Caco-2 (cell line): ENCODE measurements at regions of chr2 and their contacts with region 1.

Region 1: DNA sequence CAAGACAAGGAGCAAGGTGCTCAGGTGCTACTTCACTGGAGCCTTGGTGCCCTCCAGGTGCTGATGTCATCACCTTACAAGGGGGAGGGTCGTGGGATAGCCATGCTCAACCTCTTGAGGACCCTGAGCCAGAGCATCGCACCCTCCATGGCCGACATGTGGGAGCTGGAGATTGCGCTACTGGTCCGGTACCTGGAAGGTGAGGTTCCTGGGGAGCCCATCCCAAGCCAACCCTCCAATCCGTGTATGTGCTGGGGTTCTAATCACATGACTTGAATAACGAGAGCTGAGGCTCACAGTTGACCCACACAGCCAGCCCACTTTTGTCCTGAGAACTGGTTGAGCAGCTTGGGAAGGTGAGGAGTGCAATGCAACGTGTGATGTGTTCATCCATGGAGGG is 25.9 kb downstream of the MROH2A start:
- DNase-seq: no peak
- H3K4me3 ChIP-seq: no peak overlapping the region
- H3K4me3 Mint-ChIP-seq: no peak overlapping the region
- H3K27ac Mint-ChIP-seq: no peak overlapping the region
- H3K4me1 ChIP-seq: no peaks in the 10 kb centered on the region
- H3K4me1 Mint-ChIP-seq: no peaks in the 10 kb centered on the region
- H3K27me3 ChIP-seq: no peaks in the 10 kb centered on the region
- H3K27me3 Mint-ChIP-seq: no peaks in the 10 kb centered on the region
- CTCF ChIP-seq: no peak

Region 2: DNA sequence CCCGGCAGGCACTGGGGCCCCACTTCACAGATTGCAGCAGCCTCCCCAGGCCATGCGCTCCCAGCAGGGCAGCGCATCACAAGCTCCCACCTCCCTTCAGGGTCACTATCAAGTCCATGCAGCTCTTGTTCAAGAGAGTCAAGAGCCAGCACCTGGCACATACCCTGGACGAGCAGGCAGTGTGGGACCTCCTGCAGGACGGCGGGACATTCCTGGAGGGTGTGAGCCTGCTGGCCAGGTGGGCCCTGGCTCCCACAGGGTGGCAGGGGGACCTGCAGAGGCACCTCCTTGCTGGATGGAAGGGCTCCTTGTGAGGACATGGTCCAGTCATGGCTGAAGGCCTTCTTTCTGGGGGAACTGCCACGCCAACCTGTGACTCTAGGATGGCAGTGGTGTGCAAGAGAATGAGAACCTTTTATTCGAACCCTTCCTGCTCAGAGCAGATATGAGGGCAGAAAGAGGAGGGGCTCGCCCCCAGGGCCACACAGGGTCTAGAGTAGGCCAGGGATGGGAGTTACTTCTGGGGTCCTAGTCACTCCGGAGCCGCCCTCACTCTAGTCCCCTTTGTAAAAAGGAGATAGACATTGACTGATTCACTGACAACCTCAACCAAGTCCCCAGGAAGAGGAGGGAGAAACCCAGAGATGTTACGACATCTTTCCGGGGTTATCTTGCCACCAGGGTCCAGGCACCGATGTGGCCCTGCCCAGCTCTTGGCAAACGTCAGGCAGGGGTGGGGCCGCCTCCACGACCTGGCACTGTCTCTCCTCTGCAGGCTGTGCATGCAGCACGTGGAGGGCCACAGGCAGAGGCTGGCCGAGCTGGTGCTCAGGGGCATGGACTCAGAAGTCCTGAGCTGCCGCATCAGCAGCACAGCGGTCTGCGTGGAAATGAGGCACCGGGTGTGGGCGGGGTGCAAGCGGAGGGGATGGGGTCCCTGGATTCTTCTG is 19.1 kb after region 1 on chr2:
- CTCF ChIA-PET with region 1: no interaction called
- POLR2A ChIA-PET with region 1: no interaction called
- intact Hi-C with region 1: loop called (anchors 1 kb)
- DNase-seq: no peak
- H3K4me3 ChIP-seq: no peak overlapping the region
- H3K4me3 Mint-ChIP-seq: no peak overlapping the region
- H3K27ac Mint-ChIP-seq: no peak overlapping the region
- H3K4me1 ChIP-seq: no peaks in the 10 kb centered on the region
- H3K4me1 Mint-ChIP-seq: no peaks in the 10 kb centered on the region
- H3K27me3 ChIP-seq: no peaks in the 10 kb centered on the region
- H3K27me3 Mint-ChIP-seq: no peaks in the 10 kb centered on the region
- CTCF ChIP-seq: no peak

Region 3: GRCh38 chr2:234003972-234004617 is 200.1 kb after region 1 on chr2:
- CTCF ChIA-PET with region 1: no interaction called
- POLR2A ChIA-PET with region 1: no interaction called
- intact Hi-C with region 1: no loop called
- DNase-seq: no peak
- H3K4me3 ChIP-seq: no peak overlapping the region
- H3K4me3 Mint-ChIP-seq: no peak overlapping the region
- H3K27ac Mint-ChIP-seq: no peak overlapping the region
- H3K4me1 ChIP-seq: no peaks in the 10 kb centered on the region
- H3K4me1 Mint-ChIP-seq: no peaks in the 10 kb centered on the region
- H3K27me3 ChIP-seq: no peaks in the 10 kb centered on the region; the same call in 1 of the 2 replicates
- H3K27me3 Mint-ChIP-seq: peaks cover 6% of the 10 kb centered on the region
- CTCF ChIP-seq: no peak